Left cardiac atrium (tissue), 4 donors: ENCODE measurements at regions of chr2 and their contacts with region 1.

Region 1: DNA sequence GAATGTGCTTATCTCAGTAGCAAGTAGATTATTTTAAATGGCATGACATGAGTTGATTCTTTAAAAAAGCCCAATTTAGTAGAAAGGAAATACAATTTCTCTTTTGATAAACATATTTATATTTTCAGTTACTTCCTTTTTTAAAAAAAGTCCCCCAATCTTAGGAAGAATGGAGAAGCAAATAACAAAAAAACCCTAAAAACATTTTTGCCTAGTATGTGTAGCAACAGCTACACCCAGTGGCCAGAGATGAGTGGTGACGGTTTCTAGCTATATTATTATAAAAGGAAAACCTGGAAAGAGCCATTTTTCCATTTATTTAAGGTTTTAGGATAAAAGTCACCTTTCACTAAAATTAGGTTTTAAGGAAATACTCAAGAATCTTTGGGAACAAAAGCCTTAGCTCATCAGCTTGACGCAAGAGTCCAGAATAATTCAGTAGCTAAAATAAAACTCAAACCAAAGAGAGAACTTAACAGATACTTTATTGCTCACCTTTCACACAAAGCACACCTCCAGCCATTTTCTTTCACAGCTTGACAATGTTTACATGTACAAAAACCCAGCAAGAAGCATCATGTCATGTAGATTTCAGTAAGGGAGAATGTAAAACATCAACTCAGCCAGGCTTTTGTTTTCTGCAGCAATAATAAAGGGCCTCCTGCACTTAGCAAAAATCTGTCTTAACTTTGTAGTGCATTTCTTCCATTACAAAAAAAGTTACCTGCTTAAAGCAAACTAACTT is 15.7 kb downstream of the FAM98A start:
- DNase-seq: no peak
- ATAC-seq: peak; percentile 49 to 67

Region 2: GRCh38 chr2:33412920-33413319 is 170.4 kb before region 1 on chr2:
- intact Hi-C with region 1: loop called in 1 of 2 experiments (anchors 5 kb)
- DNase-seq: no peak
- ATAC-seq: peak; percentile 36 to 53